ENCODE measurements at regions of chr2 and their contacts with region 1.

Region 1: GRCh38 chr2:28594289-28595108 is 98.6 kb downstream of the PLB1 start:
- DNase-seq: peak; percentile 53
- H3K4me3 ChIP-seq: no peak overlapping the region
- H3K27ac ChIP-seq: peak overlapping the region; percentile 61
- H3K27me3 ChIP-seq: no peaks in the 10 kb centered on the region
- CTCF ChIP-seq: peak; percentile 80

Region 2: DNA sequence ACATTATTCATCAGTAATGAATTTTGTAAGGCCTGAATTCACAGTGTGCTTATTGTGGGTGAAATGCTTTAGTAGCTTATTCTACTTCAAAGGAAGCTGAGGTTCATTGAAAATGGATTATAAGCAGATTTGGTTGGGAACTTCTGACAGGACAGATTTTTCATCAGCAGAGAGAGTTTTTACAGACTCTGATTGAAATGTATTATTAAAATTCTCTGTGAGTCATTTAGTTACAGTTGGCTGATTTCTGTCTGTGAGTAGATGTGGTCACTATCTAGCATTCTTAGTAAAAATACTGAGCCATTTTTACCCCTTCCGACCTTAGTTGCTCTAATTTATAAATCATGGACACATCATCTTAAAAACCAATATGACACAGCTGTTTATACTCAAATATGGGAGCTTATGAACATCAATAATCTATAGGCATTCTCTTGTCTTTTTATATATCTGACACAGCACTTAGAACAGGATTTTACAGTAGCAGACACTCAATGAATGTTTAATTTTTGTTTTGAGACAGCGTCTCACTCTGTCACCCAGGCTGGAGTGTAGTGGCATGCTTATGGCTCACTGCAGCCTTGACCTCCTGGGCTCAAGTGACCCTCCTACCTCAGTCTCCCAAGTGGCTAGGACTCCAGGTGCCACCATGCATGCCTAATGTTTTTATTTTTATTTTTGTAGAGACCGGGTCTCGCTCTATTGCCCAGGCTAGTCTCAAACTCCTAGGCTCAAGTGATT is 464.4 kb before region 1 on chr2:
- CTCF ChIA-PET with region 1: no interaction called
- POLR2A ChIA-PET with region 1: no interaction called
- DNase-seq: no peak
- H3K4me3 ChIP-seq: no peak overlapping the region
- H3K27ac ChIP-seq: no peak overlapping the region
- H3K27me3 ChIP-seq: no peaks in the 10 kb centered on the region
- CTCF ChIP-seq: no peak

Region 3: GRCh38 chr2:28239207-28239606 is 355.3 kb before region 1 on chr2:
- CTCF ChIA-PET with region 1: no interaction called
- POLR2A ChIA-PET with region 1: no interaction called
- DNase-seq: no peak
- H3K4me3 ChIP-seq: no peak overlapping the region
- H3K27ac ChIP-seq: no peak overlapping the region
- H3K27me3 ChIP-seq: no peaks in the 10 kb centered on the region
- CTCF ChIP-seq: no peak

Region 4: GRCh38 chr2:28423856-28424605 is 170.5 kb before region 1 on chr2:
- CTCF ChIA-PET with region 1: no interaction called
- POLR2A ChIA-PET with region 1: no interaction called
- DNase-seq: no peak
- H3K4me3 ChIP-seq: no peak overlapping the region
- H3K27ac ChIP-seq: peak overlapping the region; percentile 1
- H3K27me3 ChIP-seq: no peaks in the 10 kb centered on the region
- CTCF ChIP-seq: no peak

Region 5: GRCh38 chr2:28566521-28567041 is 27.9 kb before region 1 on chr2:
- CTCF ChIA-PET with region 1: interaction called, 14 read pairs
- POLR2A ChIA-PET with region 1: no interaction called
- DNase-seq: peak; percentile 61
- H3K4me3 ChIP-seq: peak overlapping the region; percentile 65
- H3K27ac ChIP-seq: peak overlapping the region; percentile 49
- H3K27me3 ChIP-seq: no peaks in the 10 kb centered on the region
- CTCF ChIP-seq: peak; percentile 99

Region 6: DNA sequence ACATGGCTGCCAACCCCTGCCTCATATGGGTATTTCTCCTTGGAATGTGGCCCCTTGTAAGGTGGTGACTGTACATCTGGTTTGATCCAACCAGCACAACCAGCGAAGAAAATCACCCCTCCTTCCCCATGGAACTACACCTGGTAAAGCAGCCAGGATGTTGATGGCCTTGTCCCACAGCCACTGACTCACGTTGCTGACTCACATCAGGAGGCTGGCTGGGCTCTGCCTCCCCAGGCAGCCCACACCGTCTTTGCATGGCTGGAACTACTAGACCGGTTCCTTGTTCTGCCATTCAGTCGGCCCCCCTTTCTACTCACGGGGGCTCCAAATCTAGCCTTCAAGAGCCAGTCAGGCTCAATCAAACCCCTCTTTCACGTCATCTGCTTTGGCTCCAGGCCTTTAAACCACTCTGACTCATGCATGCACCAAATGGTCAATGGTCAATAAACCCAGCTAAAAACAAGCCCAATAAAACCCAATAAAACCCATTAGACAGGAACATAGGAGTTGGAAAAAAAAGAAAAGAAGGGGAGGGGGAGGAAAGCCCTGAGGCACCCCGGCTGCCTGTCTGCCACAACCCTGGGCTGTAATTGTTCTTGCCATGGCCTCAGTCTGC is 16.2 kb after region 1 on chr2:
- CTCF ChIA-PET with region 1: interaction called, 28 read pairs
- POLR2A ChIA-PET with region 1: no interaction called
- DNase-seq: peak; percentile 82
- H3K4me3 ChIP-seq: no peak overlapping the region
- H3K27ac ChIP-seq: peak overlapping the region; percentile 47
- H3K27me3 ChIP-seq: no peaks in the 10 kb centered on the region
- CTCF ChIP-seq: no peak

Region 7: GRCh38 chr2:28665041-28665704 is 70.7 kb after region 1 on chr2:
- CTCF ChIA-PET with region 1: interaction called, 17 read pairs
- POLR2A ChIA-PET with region 1: no interaction called
- DNase-seq: peak; percentile 74
- H3K4me3 ChIP-seq: no peak overlapping the region
- H3K27ac ChIP-seq: peak overlapping the region; percentile 87
- H3K27me3 ChIP-seq: no peaks in the 10 kb centered on the region
- CTCF ChIP-seq: no peak

Region 8: DNA sequence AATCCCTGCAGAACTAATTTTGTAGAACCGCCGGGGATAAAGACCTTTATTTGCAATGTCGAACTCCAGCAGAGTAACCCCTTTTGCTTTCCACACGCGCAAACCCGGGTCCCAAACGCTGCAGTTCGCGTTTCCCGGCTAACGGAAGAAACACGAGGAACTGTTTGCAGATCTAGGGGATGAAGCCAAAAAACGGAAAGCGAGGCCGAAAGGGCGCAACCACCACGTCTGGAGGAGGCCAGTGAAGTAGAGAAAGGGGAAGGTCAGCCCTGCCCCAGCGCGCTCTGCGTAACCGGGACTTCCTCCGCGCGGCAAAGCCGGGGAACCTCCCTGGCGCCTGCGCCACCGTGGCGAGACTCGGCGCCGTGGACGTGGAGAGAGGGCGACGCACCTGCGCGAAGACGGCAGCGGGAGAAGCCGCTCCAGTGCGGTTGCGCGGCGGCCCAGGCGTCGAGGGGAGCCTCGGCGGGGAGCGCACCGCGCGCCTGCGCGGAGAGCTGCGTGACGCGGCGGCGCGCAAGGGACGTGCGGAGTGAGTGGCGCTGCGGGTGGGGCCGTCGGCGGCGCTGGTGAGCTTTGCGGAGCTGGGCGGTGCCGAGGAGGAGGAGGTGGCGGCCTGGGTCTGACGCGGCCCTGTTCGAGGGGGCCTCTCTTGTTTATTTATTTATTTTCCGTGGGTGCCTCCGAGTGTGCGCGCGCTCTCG is 156.9 kb after region 1 on chr2 and contains the start of gene PPP1CB:
- CTCF ChIA-PET with region 1: interaction called, 51 read pairs
- POLR2A ChIA-PET with region 1: interaction called, 5 read pairs
- DNase-seq: peak; percentile 92
- H3K4me3 ChIP-seq: peak within 1 kb of the TSS; percentile 93
- H3K27ac ChIP-seq: peak within 1 kb of the TSS; percentile 94
- H3K27me3 ChIP-seq: no peaks in the 10 kb centered on the region
- CTCF ChIP-seq: peak; percentile 20
- polyA plus RNA-seq, gene PPP1CB: 105 and 159 TPM in 2 replicates

Region 9: GRCh38 chr2:28801726-28802487 is 207.4 kb after region 1 on chr2:
- CTCF ChIA-PET with region 1: interaction called, 17 read pairs
- POLR2A ChIA-PET with region 1: no interaction called
- DNase-seq: no peak
- H3K4me3 ChIP-seq: no peak overlapping the region
- H3K27ac ChIP-seq: no peak overlapping the region
- H3K27me3 ChIP-seq: no peaks in the 10 kb centered on the region
- CTCF ChIP-seq: no peak

Region 10: DNA sequence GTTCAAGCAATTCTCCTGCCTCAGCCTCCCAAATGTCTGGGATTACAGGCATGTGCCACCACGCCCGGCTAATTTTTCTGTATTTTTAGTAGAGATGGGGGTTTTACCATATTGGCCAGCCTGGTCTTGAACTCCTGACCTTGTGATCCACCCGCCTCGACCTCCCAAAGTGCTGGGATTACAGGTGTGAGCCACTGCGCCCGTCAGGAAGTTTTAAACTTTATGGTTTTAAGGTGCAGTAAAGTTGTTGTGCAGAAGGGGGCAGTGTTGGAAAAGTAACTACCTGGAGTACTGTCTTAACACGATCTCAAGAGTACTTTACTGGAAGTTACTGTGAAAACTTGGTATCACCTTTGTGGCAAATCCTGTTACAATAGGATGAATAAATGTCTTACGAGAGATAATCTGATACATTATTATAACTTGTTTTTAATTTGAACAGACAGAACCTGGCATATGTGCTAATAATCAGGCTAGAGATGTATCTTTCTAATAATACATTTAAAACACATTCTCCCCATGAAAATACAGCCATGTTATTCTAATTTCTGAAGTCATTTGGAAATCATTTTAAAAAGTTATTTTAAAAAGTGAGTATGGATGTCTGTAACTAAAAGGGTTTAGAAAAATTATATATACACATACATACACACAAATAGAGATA is 226.9 kb after region 1 on chr2:
- CTCF ChIA-PET with region 1: interaction called, 10 read pairs
- POLR2A ChIA-PET with region 1: no interaction called
- DNase-seq: no peak
- H3K4me3 ChIP-seq: no peak overlapping the region
- H3K27ac ChIP-seq: no peak overlapping the region
- H3K27me3 ChIP-seq: no peaks in the 10 kb centered on the region
- CTCF ChIP-seq: peak; percentile 67